Activated CD4-positive, alpha-beta memory T cell treated with anti-CD3 and anti-CD28 coated beads for 36 hours (primary cell): ENCODE measurements at regions of chr1 and their contacts with region 1.

Region 1: DNA sequence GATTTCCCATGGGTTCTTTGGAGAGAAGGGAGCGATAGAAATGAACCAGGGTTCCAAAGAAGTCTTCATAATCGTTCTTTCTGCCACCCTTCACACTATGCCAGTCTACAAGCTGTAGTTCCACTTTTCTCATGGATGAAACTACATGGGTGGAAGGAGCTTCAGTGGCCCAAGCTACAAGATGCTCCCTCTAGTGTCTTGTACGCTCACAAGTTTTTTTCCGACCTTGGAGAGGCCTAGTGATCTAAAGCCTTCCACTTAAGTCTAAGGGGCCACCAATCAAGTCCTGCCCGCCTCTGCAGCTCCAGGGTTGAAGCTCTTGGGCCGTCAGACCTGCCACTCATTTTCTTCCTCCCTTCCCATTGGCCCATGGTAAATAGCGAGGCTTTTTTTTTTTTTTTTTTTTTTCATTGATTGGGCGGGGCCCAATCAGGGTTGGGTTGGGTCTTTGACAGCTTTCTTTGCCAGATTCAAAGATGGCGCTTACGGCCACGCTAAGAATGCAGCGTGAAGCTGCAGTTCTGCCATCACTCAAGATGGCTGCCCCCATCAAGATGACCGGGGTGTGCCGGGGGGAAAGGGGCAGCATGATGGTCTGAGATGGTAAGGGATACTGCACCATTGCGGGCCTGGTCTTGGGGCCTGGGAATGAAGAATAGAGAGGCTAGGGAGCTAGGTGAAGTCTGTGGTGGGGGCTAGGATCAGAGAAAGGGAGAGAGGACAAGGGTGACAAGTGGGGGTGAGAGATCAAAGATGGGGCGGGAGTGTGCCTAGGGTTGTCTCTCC is at the start of gene TOMM40L:
- DNase-seq: peak; percentile 92
- H3K4me3 Mint-ChIP-seq: peak within 1 kb of the TSS; percentile 100
- H3K27ac Mint-ChIP-seq: peak within 1 kb of the TSS; percentile 86
- H3K4me1 Mint-ChIP-seq: peaks cover 23% of the 10 kb centered on the region
- H3K27me3 Mint-ChIP-seq: no peaks in the 10 kb centered on the region
- total RNA-seq, gene TOMM40L: 14.8 to 15.4 TPM

Region 2: DNA sequence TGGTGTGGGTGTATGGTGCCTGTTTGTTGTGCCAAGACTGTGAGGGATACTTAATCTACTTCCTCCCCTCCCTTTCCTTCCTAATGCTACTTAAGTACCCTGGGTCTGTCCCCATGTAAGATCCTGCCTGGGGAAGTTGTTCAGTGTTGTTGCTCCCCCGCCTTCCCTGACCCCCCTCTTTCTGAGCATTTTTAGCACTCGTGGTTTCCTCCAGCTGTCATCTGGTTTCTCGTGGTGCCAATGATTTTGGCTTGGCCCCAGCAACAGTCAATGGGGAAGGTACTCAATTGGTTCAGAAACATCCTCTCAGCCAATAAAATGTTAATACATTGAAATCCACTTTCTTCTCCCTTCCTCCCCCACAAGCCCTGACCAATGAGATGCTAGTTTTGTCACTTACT is 40.4 kb before region 1 on chr1:
- CTCF ChIA-PET with region 1: interaction called, 69 read pairs
- POLR2A ChIA-PET with region 1: interaction called, 4 read pairs
- intact Hi-C with region 1: loop called (anchors 1 kb)
- DNase-seq: peak; percentile 89
- H3K4me3 Mint-ChIP-seq: peak overlapping the region; percentile 49
- H3K27ac Mint-ChIP-seq: peak overlapping the region; percentile 95
- H3K4me1 Mint-ChIP-seq: peaks cover 81% of the 10 kb centered on the region
- H3K27me3 Mint-ChIP-seq: no peaks in the 10 kb centered on the region

Region 3: DNA sequence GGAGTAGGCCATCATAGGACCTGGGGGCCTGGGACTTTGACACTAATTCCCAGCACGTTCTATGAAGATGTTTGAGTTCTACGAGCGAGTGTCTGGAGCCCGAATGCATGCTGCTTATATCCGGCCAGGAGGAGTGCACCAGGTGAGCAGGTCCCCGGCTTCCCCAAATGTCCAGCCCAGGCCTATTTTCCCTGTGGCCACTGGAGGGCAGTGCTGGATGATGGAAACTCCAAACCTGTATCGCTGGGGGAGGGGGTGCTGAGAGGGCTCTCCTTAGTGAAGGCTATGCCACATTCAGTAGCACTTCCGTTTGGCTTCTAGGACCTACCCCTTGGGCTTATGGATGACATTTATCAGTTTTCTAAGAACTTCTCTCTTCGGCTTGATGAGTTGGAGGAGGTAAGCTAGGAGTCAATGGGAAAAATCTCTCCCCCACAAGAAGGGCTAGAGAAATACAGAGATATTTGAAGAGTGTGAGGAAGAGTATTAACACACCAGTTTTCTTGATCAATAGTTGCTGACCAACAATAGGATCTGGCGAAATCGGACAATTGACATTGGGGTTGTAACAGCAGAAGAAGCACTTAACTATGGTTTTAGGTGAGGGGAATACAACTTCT is 15.8 kb before region 1 on chr1:
- CTCF ChIA-PET with region 1: interaction called, 103 read pairs
- POLR2A ChIA-PET with region 1: interaction called, 6 read pairs
- intact Hi-C with region 1: loop called (anchors 1 kb)
- DNase-seq: peak; percentile 83
- H3K4me3 Mint-ChIP-seq: no peak overlapping the region
- H3K27ac Mint-ChIP-seq: peak overlapping the region; percentile 5
- H3K4me1 Mint-ChIP-seq: peaks cover 21% of the 10 kb centered on the region
- H3K27me3 Mint-ChIP-seq: no peaks in the 10 kb centered on the region

Region 4: GRCh38 chr1:161305867-161306519 is 80.3 kb after region 1 on chr1:
- CTCF ChIA-PET with region 1: interaction called, 15 read pairs
- POLR2A ChIA-PET with region 1: interaction called, 3 read pairs
- intact Hi-C with region 1: loop called (anchors 1 kb)
- DNase-seq: peak; percentile 94
- H3K4me3 Mint-ChIP-seq: peak overlapping the region; percentile 89
- H3K27ac Mint-ChIP-seq: peak overlapping the region; percentile 78
- H3K4me1 Mint-ChIP-seq: peaks cover 31% of the 10 kb centered on the region
- H3K27me3 Mint-ChIP-seq: no peaks in the 10 kb centered on the region

Region 5: DNA sequence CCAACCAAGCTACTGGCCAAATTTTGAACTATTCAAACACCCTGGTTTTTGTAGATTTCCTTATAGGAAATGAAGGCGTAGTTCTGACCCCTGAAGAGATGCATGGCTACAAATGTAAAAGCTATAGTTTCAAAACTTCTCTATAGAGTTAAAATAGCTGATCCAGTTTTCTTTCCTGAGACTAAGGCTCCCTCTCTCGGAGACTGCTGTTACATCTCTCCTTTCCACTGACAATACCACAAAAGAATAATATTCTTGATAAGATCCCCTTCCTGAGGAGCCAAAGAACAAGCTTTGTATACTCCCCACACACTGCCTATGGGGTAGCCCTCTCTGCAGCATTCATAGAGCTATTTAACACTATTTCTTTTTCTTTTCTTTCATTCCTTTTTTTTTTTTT is 148.6 kb after region 1 on chr1:
- CTCF ChIA-PET with region 1: interaction called, 213 read pairs
- POLR2A ChIA-PET with region 1: interaction called, 3 read pairs
- intact Hi-C with region 1: no loop called
- DNase-seq: no peak
- H3K4me3 Mint-ChIP-seq: no peak overlapping the region
- H3K27ac Mint-ChIP-seq: no peak overlapping the region
- H3K4me1 Mint-ChIP-seq: peaks cover 2% of the 10 kb centered on the region
- H3K27me3 Mint-ChIP-seq: no peaks in the 10 kb centered on the region